IMR-90 (cell line): ENCODE measurements at regions of chr10 and their contacts with region 1.

Region 1: DNA sequence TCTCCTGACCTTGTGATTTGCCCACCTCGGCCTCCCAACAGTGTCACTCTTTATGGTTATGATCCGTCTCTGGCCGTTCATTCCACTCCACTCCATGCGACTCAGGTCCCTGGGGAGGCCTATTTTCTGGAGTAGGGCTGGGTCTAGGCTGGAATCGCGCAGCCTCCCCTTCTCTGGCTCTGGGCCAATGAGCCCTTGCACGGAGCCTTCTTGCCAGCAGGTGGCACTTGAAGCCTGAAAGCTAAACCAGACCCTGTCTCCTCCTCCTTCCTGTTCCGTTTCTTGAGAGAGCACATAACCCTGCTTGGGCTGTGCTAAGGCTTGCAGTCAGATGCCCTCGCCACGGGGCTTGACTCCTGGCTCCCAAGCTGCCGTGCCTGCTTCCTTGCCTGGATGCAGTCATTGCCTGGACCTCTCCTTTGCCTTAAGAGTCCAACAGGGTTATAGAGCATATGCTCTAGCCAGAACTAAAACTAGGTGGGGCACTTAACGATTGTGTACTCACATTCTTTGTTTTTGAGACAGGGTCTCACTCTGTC is 9.6 kb upstream of the DNAJB12 start:
- DNase-seq: peak; percentile 91
- ATAC-seq: peak; percentile 95
- H3K4me3 ChIP-seq: no peak overlapping the region
- H3K27ac ChIP-seq: peak overlapping the region; percentile 88
- H3K4me1 ChIP-seq: peaks cover 12% of the 10 kb centered on the region
- H3K27me3 ChIP-seq: no peaks in the 10 kb centered on the region
- CTCF ChIP-seq: peak; percentile 92
- POLR2A ChIP-seq: no peak
- RAD21 ChIP-seq: peak; percentile 93

Region 2: GRCh38 chr10:72625608-72626443 is 261.5 kb after region 1 on chr10 and contains the start of gene MICU1:
- CTCF ChIA-PET with region 1: no interaction called
- POLR2A ChIA-PET with region 1: no interaction called
- dilution Hi-C with region 1: no loop called
- in situ Hi-C with region 1: no loop called
- intact Hi-C with region 1: loop called (anchors 2 kb)
- DNase-seq: peak; percentile 90
- ATAC-seq: peak; percentile 99
- H3K4me3 ChIP-seq: peak within 1 kb of the TSS; percentile 73
- H3K27ac ChIP-seq: peak within 1 kb of the TSS; percentile 80
- H3K4me1 ChIP-seq: peaks cover 5% of the 10 kb centered on the region
- H3K27me3 ChIP-seq: no peaks in the 10 kb centered on the region
- CTCF ChIP-seq: no peak
- POLR2A ChIP-seq: peak; percentile 82
- RAD21 ChIP-seq: no peak
- total RNA-seq, gene MICU1: 43.6 and 45.0 TPM in 2 replicates

Region 3: DNA sequence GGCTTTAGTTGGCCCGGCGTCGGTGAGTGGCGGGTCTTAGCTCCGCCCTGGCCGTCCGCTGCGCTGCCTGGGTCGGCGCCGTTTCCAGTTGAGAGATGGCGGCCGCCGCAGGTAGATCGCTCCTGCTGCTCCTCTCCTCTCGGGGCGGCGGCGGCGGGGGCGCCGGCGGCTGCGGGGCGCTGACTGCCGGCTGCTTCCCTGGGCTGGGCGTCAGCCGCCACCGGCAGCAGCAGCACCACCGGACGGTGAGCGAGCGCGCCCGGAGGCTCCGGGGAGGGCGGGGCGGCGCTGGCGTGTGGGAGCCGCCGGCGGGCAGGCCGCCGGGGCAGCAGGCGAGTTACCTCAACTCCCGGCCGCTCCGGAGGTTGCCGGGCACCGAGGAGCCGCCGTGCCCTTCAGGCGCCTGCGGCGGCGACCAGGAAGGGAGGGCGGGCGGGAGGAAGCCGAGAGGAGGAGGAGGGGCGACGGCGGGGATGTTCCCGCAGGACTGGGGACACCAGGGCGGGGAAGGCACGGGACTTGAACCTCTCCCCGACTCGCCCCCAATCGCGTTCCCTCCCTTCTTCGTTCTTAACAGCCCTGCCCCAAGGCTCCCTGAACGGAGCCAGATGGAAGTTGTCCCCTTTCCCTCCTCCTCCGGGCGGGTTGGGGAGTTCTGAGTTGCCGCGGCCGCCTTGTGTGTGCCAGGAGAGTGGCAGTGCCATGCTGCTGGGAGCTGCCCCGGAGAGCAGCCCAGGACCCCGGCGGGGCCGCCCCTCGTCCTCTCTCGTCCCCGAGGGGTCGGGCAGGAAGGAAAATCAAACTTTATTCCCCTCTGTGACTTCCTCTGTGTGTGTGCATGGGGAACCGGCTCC is 328.0 kb after region 1 on chr10 and contains the start of gene MCU:
- CTCF ChIA-PET with region 1: no interaction called
- POLR2A ChIA-PET with region 1: no interaction called
- dilution Hi-C with region 1: no loop called
- in situ Hi-C with region 1: no loop called
- intact Hi-C with region 1: loop called (anchors 2 kb)
- DNase-seq: peak; percentile 37
- ATAC-seq: peak; percentile 96
- H3K4me3 ChIP-seq: peak within 1 kb of the TSS; percentile 95
- H3K27ac ChIP-seq: peak within 1 kb of the TSS; percentile 83
- H3K4me1 ChIP-seq: peaks cover 8% of the 10 kb centered on the region; the same call in 1 of the 2 replicates
- H3K27me3 ChIP-seq: no peaks in the 10 kb centered on the region
- CTCF ChIP-seq: no peak
- POLR2A ChIP-seq: peak; percentile 60; the same call in 1 of the 2 replicates
- RAD21 ChIP-seq: no peak; the same call in 1 of the 2 replicates
- total RNA-seq, gene MCU: 36.2 and 39.7 TPM in 2 replicates

Region 4: DNA sequence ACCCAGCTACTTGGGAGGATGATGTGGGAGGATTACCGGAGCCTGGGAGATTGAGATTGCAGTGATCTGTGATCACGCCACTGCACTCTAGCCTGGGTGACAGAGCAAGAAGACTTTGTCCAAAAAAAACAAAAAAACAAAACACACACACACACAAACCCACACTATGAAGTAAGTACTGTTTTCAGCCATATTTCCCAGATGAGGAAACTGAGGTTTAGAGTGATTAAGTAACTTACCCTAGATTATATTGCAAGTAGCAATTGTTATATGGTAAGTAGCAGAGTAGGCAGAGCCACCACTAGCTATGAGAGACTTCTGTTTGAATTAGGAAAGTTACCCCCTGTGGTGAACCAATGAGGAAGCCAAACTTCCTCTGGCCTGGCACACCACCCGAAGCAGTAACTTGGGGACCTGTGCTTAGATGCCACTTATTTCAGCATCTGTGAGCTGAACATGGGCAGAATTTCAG is 389.5 kb after region 1 on chr10:
- CTCF ChIA-PET with region 1: no interaction called
- POLR2A ChIA-PET with region 1: no interaction called
- dilution Hi-C with region 1: no loop called
- in situ Hi-C with region 1: no loop called
- intact Hi-C with region 1: loop called (anchors 1 kb)
- DNase-seq: no peak
- ATAC-seq: no peak
- H3K4me3 ChIP-seq: no peak overlapping the region
- H3K27ac ChIP-seq: no peak overlapping the region
- H3K4me1 ChIP-seq: peaks cover 2% of the 10 kb centered on the region; the same call in 1 of the 2 replicates
- H3K27me3 ChIP-seq: no peaks in the 10 kb centered on the region
- CTCF ChIP-seq: no peak
- POLR2A ChIP-seq: no peak
- RAD21 ChIP-seq: no peak

Region 5: DNA sequence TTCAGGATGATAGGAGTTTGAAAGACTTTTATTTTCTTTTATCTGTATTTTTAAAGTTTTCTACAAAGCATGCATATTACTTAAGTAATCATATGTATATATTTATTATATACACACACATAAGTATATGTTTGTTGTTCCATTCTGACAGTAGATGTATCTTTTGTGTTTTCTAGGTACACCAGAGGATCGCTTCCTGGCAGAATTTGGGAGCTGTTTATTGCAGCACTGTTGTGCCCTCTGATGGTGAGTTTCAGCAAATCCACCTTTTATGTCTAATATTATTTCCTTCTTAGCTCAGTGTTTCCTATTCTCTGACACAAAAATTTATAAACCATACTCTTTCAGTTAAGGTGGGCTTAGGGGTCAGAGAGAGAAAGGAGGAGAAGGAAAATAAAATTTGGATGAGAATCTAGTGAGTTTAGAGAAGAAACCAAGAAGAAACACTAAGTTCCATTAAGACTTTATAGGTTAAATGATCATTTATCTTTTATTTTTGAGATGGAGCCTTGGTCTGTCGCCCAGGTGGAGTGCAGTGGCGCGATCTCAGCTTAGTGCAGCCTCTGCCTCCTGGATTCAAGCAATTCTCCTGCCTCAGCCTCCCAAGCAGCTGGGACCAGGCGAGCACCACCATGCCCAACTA is 470.0 kb after region 1 on chr10:
- CTCF ChIA-PET with region 1: interaction called, 3 read pairs
- POLR2A ChIA-PET with region 1: no interaction called
- dilution Hi-C with region 1: no loop called
- in situ Hi-C with region 1: loop called (anchors 5 kb)
- intact Hi-C with region 1: loop called (anchors 1 kb)
- DNase-seq: peak; percentile 76
- ATAC-seq: peak; percentile 87
- H3K4me3 ChIP-seq: no peak overlapping the region
- H3K27ac ChIP-seq: no peak overlapping the region
- H3K4me1 ChIP-seq: no peaks in the 10 kb centered on the region
- H3K27me3 ChIP-seq: no peaks in the 10 kb centered on the region
- CTCF ChIP-seq: peak; percentile 81
- POLR2A ChIP-seq: no peak
- RAD21 ChIP-seq: peak; percentile 92

Region 6: DNA sequence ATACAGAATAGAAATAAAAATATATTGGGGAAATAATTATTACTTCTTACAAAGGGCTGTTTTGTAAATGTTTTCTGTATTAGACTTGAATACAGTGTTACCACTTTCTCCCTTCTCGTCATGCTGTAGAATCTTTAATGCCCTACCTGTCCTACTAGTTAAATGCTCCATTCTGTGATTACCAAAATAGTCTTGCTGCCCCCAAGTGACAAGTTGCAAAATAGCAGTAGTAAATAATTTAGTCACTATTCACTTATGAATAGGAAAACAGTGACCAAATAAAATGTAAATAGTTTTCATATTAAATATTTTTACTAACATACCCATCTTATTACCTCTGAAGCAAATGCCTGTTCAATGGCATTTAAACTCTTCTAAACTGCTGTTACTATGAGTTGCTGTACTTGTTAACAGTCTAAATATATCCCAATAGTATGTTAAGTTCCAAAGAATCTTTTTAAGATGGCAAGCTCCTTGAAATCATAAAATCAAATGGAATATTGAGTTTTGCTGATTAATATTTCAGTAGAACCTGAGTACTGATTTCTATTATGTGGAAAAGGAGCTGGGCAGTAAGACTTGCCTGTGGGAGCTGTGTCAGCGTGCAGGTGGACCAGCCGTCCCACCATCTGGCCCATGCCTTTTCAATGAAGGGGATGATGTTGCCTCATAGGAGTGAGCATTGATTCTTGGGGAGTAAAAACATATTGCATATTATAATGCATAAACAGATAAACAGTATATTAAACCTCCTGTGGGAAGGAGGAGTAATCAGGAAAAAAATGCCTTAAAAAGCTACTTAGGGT is 511.1 kb after region 1 on chr10:
- CTCF ChIA-PET with region 1: no interaction called
- POLR2A ChIA-PET with region 1: no interaction called
- dilution Hi-C with region 1: no loop called
- in situ Hi-C with region 1: no loop called
- intact Hi-C with region 1: loop called (anchors 1 kb)
- DNase-seq: peak; percentile 43
- ATAC-seq: peak; percentile 75
- H3K4me3 ChIP-seq: no peak overlapping the region
- H3K27ac ChIP-seq: no peak overlapping the region
- H3K4me1 ChIP-seq: no peaks in the 10 kb centered on the region
- H3K27me3 ChIP-seq: no peaks in the 10 kb centered on the region
- CTCF ChIP-seq: peak; percentile 63
- POLR2A ChIP-seq: no peak
- RAD21 ChIP-seq: peak; percentile 63

Region 7: DNA sequence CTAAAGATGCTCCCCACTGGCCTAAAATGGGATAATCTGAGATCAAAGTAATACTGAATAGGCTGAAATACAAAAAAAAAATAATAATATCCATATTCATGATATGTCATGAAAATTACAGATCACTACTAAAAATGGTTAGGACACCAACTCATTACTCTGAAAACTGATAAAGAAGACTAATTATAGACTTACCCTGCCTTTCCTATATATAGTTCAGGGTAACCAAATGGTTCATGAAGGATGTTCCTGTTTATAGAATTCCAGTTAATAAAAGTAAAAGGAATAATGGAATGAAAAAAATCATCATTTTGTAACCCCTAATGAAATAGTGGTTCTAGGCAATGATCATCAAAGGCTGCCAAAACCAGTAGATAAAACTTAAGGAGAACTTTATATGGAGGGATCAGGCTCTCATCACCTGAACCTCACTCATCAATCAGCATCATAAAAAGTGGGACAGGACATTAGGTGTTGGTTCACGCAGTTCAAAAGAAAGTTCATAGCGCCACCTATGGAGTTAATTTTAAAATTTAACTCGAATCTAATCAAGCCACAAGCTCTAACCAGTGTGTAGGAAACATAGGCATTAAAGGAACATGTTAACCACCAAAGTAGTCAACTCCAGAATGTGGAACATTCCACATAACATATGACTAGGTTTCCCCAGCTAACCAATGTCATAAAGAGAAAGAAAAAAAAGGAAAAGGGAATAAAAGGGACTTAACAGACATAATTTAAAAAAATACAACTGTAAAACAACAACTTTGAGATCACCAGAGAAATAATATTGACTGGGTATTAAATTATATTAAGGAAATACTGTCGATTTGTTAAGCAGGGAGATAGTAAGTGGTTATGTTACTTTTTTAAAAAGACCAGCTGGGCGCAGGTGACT is 696.7 kb after region 1 on chr10:
- CTCF ChIA-PET with region 1: no interaction called
- POLR2A ChIA-PET with region 1: no interaction called
- dilution Hi-C with region 1: no loop called
- in situ Hi-C with region 1: loop called (anchors 10 kb)
- intact Hi-C with region 1: no loop called
- DNase-seq: peak; percentile 8
- ATAC-seq: peak; percentile 67
- H3K4me3 ChIP-seq: no peak overlapping the region
- H3K27ac ChIP-seq: no peak overlapping the region
- H3K4me1 ChIP-seq: no peaks in the 10 kb centered on the region
- H3K27me3 ChIP-seq: no peaks in the 10 kb centered on the region
- CTCF ChIP-seq: peak; percentile 36
- POLR2A ChIP-seq: no peak
- RAD21 ChIP-seq: peak; percentile 41; the same call in 1 of the 2 replicates